ENCODE measurements at regions of chr5 and their contacts with region 1.

Region 1: GRCh38 chr5:42767491-42768105 is 11.0 kb downstream of the CCDC152 start:
- DNase-seq: no peak
- ATAC-seq: no peak
- H3K4me3 Mint-ChIP-seq: no peak overlapping the region
- H3K27ac Mint-ChIP-seq: no peak overlapping the region
- H3K4me1 Mint-ChIP-seq: no peaks in the 10 kb centered on the region
- H3K27me3 Mint-ChIP-seq: peaks cover 6% of the 10 kb centered on the region

Region 2: GRCh38 chr5:42583322-42583721 is 184.3 kb before region 1 on chr5:
- CTCF ChIA-PET with region 1: interaction called, 11 read pairs
- POLR2A ChIA-PET with region 1: no interaction called
- DNase-seq: peak; percentile 55
- ATAC-seq: no peak
- H3K4me3 Mint-ChIP-seq: no peak overlapping the region
- H3K27ac Mint-ChIP-seq: no peak overlapping the region
- H3K4me1 Mint-ChIP-seq: no peaks in the 10 kb centered on the region
- H3K27me3 Mint-ChIP-seq: peaks cover 8% of the 10 kb centered on the region

Region 3: GRCh38 chr5:42798284-42799240 is 31.0 kb after region 1 on chr5:
- CTCF ChIA-PET with region 1: no interaction called
- POLR2A ChIA-PET with region 1: no interaction called
- DNase-seq: no peak
- ATAC-seq: no peak
- H3K4me3 Mint-ChIP-seq: no peak overlapping the region
- H3K27ac Mint-ChIP-seq: no peak overlapping the region
- H3K4me1 Mint-ChIP-seq: no peaks in the 10 kb centered on the region
- H3K27me3 Mint-ChIP-seq: no peaks in the 10 kb centered on the region

Region 4: DNA sequence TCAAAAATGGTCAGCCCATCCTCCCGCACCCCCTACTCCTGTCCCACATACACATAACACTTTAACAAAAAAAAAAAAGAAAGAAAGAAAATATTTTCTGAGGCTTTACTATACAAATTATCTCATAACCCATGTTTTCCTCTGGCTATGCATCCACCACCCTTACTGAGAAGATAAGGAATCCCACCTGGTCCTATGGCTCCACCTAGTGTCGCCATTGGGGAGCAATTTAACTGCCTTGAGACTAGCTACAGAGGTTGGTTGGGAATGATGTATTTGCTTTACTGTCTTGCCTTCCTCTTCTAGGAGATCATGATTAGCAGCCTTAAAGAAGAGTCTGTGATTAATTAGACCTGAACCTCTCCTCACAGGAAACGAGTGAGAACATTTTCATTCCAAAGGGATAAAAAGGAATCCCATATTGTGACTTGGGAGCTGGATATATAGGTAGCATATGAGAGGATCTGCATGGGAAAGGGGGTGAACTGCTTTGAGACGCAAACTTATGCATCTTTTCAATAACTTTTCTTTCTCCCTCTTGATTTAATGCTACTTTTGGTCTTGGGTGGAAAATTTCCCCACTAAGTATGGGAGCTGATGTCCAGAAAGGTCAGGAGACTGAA is 121.8 kb after region 1 on chr5:
- CTCF ChIA-PET with region 1: interaction called, 14 read pairs
- POLR2A ChIA-PET with region 1: no interaction called
- DNase-seq: peak; percentile 81
- ATAC-seq: peak; percentile 93
- H3K4me3 Mint-ChIP-seq: no peak overlapping the region
- H3K27ac Mint-ChIP-seq: no peak overlapping the region
- H3K4me1 Mint-ChIP-seq: no peaks in the 10 kb centered on the region
- H3K27me3 Mint-ChIP-seq: peaks cover 11% of the 10 kb centered on the region

Measured in activated CD8-positive, alpha-beta T cell treated with anti-CD3 and anti-CD28 coated beads, Interleukin-2, amount 10 ng/mL, durations not matched to agents 7 days and 5 days (primary cell).